Brain microvascular endothelial cell (primary cell): ENCODE measurements at regions of chr16 and their contacts with region 1.

Region 1: DNA sequence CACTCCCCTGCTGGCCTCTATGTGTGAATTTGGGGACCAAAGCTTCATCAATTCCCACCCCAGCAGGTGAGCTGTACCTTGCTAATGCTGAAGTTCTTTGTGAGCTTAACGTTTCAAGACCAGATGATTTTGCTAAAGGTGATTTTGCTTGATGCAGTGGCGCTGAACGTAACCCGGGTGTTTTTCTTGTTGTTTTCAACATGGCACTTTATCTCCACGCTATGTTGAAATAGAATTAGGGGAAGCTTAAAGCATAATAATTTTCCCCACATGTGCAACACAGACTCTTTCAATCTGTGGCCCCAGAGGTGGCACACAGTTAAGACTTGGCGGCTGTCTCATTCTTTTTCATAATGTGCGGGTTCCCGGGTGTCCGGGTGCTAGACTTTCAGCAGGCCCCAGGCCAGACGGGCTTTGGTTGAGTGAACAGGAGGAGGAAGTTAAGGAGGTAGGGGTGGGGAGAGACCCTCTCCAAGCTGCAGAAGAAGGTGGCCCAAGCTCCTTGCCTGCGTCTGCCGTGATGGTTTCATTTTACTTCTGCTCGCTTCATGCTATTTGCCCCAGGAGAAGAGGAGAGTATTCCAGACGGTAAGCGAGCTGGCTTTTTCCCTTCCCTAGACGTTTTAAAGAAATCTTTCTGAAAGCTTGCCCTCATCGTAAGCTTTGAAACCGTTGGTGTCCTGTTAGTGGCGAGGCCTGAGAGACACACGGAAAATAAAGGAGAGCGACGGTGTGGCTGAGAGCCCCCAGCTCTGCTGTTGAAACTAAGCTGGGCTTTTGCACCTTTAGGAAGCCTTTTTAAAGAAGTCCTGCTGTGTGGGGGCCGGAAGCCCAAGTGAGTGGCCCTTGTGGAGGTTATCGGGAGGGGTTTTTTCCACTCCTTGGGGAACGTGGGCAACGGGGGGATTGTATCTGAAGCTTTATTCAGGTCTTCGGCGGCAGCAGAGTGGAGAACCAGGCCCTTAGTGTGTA is 4.2 kb downstream of the FOXC2 start:
- DNase-seq: no peak
- H3K4me3 ChIP-seq: peak overlapping the region; percentile 93
- H3K27ac ChIP-seq: peak overlapping the region; percentile 79
- H3K27me3 ChIP-seq: no peaks in the 10 kb centered on the region
- CTCF ChIP-seq: no peak

Region 2: DNA sequence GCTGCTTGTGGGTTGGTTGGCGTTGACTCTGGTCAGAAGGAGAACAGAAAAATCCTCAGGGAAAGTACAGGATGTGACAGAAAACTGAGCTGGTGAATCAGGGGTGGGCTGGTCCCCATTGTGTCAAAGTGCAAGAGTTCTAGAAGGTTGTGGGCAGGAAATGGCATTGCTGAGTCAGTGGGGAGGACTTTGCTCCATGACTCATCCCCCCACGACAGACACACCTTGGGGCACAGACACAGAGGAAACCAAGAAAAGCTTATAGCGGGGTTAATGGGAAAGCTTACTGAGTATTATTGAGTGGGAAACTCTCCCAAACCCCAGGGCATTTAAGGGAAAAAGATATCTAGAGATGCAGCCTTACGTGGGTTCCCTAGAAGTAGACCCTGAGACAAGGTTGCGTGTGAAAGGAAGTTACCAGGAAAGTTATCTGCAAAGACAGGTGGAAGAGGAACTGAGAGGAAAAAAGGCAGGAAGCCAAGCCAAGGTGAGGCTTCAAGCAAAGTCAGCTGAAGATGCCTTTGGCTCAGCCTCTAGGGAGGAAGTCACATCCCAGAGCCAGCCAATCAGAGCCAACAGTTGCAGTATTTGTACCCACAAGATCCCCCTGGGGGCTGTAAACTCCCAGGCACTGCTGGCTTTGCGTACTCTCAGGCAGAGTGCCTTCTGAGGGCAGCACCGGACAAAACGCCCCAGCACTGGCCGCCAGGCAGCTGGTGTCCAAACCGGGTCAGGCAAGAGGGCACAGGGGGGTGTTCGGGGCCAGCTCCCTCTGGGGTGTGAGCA is 93.9 kb after region 1 on chr16:
- in situ Hi-C with region 1: no loop called
- DNase-seq: peak; percentile 96
- H3K4me3 ChIP-seq: no peak overlapping the region
- H3K27ac ChIP-seq: peak overlapping the region; percentile 96
- H3K27me3 ChIP-seq: no peaks in the 10 kb centered on the region
- CTCF ChIP-seq: peak; percentile 23

Region 3: GRCh38 chr16:87062569-87063442 is 492.0 kb after region 1 on chr16:
- in situ Hi-C with region 1: loop called (anchors 5 kb)
- DNase-seq: peak; percentile 63
- H3K4me3 ChIP-seq: peak overlapping the region; percentile 33
- H3K27ac ChIP-seq: peak overlapping the region; percentile 77
- H3K27me3 ChIP-seq: no peaks in the 10 kb centered on the region
- CTCF ChIP-seq: peak; percentile 89